Activated naive CD4-positive, alpha-beta T cell treated with anti-CD3 and anti-CD28 coated beads for 36 hours (primary cell): ENCODE measurements at regions of chr9 and their contacts with region 1.

Region 1: GRCh38 chr9:97398999-97399758 is 12.7 kb upstream of the TDRD7 start:
- DNase-seq: peak; percentile 71
- H3K4me3 Mint-ChIP-seq: no peak overlapping the region
- H3K27ac Mint-ChIP-seq: no peak overlapping the region
- H3K4me1 Mint-ChIP-seq: peaks cover 6% of the 10 kb centered on the region
- H3K27me3 Mint-ChIP-seq: peaks cover 6% of the 10 kb centered on the region

Region 2: GRCh38 chr9:97220894-97221477 is 178.2 kb before region 1 on chr9:
- CTCF ChIA-PET with region 1: no interaction called
- intact Hi-C with region 1: loop called (anchors 10 kb)
- DNase-seq: no peak
- H3K4me3 Mint-ChIP-seq: peak overlapping the region; percentile 77
- H3K27ac Mint-ChIP-seq: no peak overlapping the region
- H3K4me1 Mint-ChIP-seq: peaks cover 5% of the 10 kb centered on the region
- H3K27me3 Mint-ChIP-seq: peaks cover 43% of the 10 kb centered on the region

Region 3: GRCh38 chr9:97386733-97387503 is 12.3 kb before region 1 on chr9:
- CTCF ChIA-PET with region 1: interaction called, 44 read pairs
- intact Hi-C with region 1: loop called (anchors 1 kb)
- DNase-seq: peak; percentile 86
- H3K4me3 Mint-ChIP-seq: no peak overlapping the region
- H3K27ac Mint-ChIP-seq: no peak overlapping the region
- H3K4me1 Mint-ChIP-seq: peaks cover 19% of the 10 kb centered on the region
- H3K27me3 Mint-ChIP-seq: peaks cover 14% of the 10 kb centered on the region